ENCODE measurements at regions of chr3 and their contacts with region 1.

Region 1: DNA sequence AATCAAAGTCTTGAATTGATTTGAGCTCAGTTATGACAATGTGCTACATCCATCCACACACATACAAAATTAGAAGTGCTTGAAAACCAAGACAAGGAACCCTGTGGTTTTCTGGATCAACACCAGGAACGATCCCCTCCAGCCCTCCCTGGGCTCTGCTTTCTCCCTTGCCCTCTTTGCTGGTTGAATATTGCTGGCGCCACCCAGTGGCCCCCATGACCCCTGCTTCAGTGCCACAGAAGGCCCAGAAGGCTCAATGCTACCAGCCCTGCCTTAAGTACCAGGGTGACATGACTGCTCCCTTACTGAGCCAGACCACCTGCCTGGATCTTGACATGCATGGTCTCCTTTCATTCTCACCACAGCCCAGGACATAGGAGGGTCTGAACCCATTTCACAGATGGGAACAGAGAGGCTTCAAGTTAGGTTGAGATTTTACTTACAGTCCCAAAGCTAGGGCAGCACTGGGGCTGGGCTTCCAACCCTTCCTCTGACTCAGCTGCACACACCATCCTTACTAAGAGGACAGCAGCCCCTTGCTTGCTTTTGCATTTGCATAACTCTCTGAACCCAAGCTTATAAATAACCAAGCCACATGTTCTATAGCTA is 15.0 kb downstream of the IL12A start:
- DNase-seq: no peak

Region 2: DNA sequence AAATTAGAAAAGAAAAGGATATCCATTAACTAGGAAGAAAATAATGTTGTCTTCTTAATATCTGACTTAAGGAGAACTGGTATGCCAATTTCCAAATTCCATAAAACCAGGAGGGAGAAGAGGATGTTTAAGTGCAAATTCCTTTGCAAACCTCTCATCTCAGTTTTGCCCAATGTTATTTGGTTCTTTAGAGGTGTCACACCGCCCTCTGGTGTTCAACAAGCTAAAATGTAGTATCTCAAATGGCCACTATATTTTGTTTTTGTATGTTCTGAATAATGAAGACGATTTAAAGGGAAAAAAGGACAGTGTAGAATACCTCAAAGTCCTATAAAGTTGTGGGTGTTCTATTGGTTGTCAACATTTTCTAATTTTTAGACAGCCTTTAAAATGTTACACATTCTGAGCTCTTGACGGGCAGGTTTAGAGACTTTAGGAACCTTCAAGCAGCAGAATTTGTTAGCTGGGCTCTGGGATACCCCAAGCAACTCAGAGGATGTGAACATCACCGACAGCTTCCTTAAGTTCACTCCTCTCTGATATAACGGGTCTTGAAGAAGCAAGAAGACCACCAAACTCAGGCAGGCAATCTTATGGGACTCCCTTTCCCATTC is 743.5 kb before region 1 on chr3:
- intact Hi-C with region 1: loop called in 1 of 2 experiments (anchors 10 kb)
- DNase-seq: no peak

Region 3: GRCh38 chr3:159839561-159840379 is 163.9 kb before region 1 on chr3:
- intact Hi-C with region 1: loop called in 1 of 2 experiments (anchors 5 kb)
- DNase-seq: peak; percentile 78

Region 4: DNA sequence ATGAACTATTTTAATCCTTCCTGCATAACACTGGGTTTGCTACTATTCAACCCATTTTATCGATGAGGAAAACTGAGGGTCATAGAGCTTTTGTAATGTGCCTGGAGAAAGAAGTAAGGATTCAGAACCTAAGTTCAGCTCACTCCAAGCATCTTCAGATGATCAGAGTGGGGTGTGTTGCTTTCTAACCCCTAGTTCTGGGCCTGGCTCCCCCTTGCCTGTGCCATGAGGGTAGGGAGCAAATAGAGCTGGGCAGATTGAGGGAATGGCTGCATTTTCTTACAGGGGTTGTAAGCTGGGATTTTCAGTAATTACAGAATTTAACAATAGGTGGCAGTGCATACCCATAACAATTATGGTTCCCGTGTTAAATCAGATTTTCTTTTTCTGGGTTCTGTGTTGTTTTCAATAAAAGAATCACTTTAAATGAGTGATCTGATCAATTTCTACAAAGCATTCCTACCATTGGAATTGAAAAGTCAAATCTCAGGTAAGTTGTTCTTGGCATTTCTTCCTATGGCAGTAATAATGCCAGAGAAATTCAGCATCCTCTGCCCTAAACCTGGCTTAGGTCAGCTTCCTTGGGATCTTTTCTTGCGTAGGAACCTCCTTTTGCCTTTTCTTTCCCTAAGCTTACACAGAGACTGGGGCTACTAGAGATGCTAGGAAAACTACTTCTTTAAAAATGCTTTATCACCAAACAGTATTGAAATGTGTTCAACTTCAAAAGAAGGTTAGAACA is 118.8 kb before region 1 on chr3:
- intact Hi-C with region 1: loop called (anchors 5 to 10 kb)
- DNase-seq: no peak

Region 5: DNA sequence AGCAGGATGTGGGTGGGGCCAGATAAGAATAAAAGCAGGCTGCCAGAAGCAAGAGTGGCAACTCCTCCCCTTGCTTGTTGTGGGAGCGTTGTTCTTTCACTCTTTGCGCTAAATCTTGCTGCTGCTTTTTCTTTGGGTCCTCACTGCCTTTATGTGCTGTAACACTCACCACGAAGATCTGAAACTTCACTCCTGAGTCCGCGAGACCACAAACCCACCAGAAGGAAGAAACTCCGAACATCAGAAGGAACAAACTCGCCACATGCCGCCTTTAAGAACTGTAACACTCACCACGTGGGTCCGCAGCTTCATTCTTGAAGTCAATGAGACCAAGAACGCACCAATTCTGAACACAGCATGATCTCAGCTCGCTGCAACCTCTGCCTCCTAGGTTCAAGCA is 57.9 kb after region 1 on chr3:
- intact Hi-C with region 1: no loop called
- DNase-seq: no peak

Measured in posterior vena cava (tissue), 2 donors.